ENCODE measurements at regions of chr1 and their contacts with region 1.

Region 1: GRCh38 chr1:24283326-24284155 is 35.6 kb upstream of the GRHL3 start:
- DNase-seq: no peak
- ATAC-seq: no peak
- H3K4me3 Mint-ChIP-seq: no peak overlapping the region
- H3K27ac Mint-ChIP-seq: no peak overlapping the region
- H3K4me1 Mint-ChIP-seq: no peaks in the 10 kb centered on the region
- H3K27me3 Mint-ChIP-seq: peaks cover 1% of the 10 kb centered on the region
- CTCF ChIP-seq: no peak

Region 2: GRCh38 chr1:24266398-24266941 is 17.1 kb before region 1 on chr1:
- CTCF ChIA-PET with region 1: no interaction called
- POLR2A ChIA-PET with region 1: no interaction called
- intact Hi-C with region 1: no loop called
- DNase-seq: no peak
- ATAC-seq: no peak
- H3K4me3 Mint-ChIP-seq: no peak overlapping the region
- H3K27ac Mint-ChIP-seq: no peak overlapping the region
- H3K4me1 Mint-ChIP-seq: no peaks in the 10 kb centered on the region
- H3K27me3 Mint-ChIP-seq: peaks cover 7% of the 10 kb centered on the region
- CTCF ChIP-seq: no peak

Region 3: DNA sequence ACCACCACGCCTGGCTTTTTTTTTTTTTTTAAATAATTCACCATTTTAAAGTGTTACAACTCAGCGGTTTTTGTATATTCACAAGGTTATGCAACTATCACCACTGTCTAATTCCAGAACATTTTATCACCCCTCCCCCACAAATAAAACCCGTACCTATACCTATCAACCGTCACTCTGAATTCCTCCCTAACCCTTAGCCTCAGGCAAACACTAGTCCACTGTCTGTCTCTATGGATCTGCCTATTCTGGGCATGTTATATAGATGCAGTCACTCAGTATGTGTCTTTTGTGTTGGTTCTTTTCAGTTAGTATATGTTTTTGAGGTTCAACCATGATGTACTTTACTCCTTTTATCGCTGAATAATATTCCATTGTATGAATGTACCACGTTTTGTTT is 16.4 kb after region 1 on chr1:
- CTCF ChIA-PET with region 1: no interaction called
- POLR2A ChIA-PET with region 1: no interaction called
- intact Hi-C with region 1: loop called (anchors 2 kb)
- DNase-seq: no peak
- ATAC-seq: no peak
- H3K4me3 Mint-ChIP-seq: no peak overlapping the region
- H3K27ac Mint-ChIP-seq: no peak overlapping the region
- H3K4me1 Mint-ChIP-seq: no peaks in the 10 kb centered on the region
- H3K27me3 Mint-ChIP-seq: peaks cover 15% of the 10 kb centered on the region
- CTCF ChIP-seq: no peak

Region 4: DNA sequence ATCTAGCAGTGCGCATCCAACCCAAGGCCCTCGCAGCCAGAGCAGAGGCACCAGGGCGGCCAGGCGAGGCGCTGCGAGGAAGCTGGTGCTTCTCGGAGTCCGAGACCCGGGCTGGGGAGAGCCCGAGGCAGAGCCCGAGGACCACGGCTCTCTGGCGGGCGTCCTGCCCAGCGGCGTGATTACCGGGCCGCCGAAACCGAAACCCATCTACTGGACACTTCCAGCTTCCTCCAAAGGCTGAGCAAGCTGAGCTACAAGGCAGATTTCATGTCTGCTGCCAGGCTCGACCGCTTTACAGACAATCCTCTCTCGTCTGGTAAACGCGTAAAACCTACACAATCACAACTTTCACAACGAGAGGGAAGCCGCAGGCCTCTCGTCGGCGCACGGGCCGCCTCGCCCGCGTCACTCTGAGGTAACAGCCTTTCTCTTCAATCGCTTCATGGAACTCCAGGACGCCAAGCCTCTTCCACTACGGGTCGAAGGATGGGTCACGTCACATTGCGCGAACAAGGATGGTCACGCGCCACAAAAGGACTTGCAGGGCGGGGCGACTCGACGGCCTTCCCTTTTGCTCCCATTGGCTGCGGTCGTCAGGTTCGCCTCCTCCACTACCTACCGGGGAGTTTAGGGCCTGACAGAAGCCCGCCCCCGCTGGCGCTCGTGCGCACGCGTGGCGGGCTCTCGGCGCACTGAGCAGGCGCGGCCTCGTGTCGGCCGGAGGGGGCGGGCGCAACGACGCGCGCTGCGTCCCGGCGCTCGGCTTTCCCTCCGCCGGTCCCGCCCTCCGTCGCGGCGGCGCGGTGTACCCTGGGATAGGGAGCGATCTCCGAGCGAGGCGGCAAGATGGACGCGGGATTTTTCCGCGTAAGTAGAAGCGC is 359.2 kb after region 1 on chr1 and contains the start of gene SRRM1:
- CTCF ChIA-PET with region 1: no interaction called
- POLR2A ChIA-PET with region 1: no interaction called
- intact Hi-C with region 1: no loop called
- DNase-seq: peak; percentile 96
- ATAC-seq: peak; percentile 90
- H3K4me3 Mint-ChIP-seq: peak within 1 kb of the TSS; percentile 96
- H3K27ac Mint-ChIP-seq: peak within 1 kb of the TSS; percentile 99
- H3K4me1 Mint-ChIP-seq: peaks cover 38% of the 10 kb centered on the region
- H3K27me3 Mint-ChIP-seq: no peaks in the 10 kb centered on the region
- CTCF ChIP-seq: no peak
- total RNA-seq, gene SRRM1: 214 and 220 TPM in 2 replicates

Measured in activated B cell treated with CpG ODN at 0.5 μM for 24 hours (primary cell).